Right ventricle myocardium inferior (tissue), 1 donor: ENCODE measurements at regions of chr6 and their contacts with region 1.

Region 1: DNA sequence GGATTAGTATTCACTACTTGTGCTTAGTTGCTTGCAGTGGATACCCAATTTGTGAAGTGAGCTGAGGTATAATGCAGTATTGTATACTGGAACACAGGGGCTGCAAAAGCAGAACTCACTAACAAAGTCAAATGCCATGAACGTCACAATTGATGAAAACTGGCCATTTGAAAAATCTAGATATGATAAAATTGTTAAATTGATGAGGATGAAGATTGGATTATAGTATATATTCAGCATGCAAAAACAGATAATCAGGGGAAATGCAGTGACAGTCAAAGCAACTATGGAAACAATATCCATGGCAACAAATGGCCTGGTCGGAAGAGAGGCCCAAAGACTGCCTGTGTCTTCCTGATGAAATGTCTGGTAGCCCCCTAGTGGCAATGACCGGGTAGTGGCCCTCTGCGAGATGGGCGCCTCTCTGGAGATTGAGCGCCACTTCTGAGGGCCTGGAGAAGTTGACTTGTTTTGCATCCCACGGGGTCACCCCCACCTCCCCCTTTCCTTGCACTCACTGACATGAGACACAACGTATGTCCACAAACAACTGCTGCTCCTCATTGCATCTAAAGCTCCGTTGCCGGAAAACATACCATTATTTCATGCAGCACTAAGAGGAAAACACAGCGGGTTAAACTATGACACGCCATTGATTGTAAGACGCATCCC is 43.6 kb downstream of the C6orf15 start:
- DNase-seq: peak; percentile 82
- ATAC-seq: peak; percentile 84

Region 2: DNA sequence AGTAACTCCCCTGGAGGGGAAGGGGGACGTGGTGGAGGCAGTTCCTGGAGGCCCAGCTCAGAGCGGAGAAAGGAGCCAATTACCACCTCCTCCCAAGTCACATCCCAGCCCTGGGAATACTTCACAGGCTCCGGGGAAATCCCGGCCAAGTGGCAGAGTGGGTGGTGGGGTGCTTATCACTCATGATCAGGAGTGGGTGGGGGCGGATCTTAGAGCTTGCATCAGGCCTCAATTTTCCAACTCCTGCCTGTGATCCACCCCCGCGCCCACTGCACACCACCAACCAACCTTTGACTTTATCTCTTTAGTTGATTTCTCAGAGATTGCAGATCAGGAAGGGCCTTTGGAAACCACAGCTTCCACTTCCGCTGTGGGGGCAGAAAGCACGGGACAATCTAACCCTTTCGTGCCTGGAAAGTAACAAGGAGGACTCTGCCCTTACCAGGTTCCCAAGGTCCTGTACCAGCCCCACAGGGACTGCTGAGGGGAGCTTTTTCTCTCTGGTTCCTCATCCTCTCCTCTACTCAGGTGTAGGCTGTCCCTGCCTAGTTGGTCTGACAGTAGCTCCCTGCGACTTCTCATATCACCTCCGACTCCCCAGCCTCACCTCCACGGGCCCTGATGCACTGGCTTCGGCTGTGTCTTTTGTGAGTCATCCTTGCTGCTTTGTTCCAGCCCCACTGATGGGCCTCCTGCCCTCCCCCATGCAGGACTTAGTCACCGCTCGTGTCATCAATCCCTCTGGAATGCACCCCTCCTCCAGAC is 299.5 kb before region 1 on chr6:
- intact Hi-C with region 1: no loop called
- DNase-seq: no peak
- ATAC-seq: peak; percentile 53

Region 3: DNA sequence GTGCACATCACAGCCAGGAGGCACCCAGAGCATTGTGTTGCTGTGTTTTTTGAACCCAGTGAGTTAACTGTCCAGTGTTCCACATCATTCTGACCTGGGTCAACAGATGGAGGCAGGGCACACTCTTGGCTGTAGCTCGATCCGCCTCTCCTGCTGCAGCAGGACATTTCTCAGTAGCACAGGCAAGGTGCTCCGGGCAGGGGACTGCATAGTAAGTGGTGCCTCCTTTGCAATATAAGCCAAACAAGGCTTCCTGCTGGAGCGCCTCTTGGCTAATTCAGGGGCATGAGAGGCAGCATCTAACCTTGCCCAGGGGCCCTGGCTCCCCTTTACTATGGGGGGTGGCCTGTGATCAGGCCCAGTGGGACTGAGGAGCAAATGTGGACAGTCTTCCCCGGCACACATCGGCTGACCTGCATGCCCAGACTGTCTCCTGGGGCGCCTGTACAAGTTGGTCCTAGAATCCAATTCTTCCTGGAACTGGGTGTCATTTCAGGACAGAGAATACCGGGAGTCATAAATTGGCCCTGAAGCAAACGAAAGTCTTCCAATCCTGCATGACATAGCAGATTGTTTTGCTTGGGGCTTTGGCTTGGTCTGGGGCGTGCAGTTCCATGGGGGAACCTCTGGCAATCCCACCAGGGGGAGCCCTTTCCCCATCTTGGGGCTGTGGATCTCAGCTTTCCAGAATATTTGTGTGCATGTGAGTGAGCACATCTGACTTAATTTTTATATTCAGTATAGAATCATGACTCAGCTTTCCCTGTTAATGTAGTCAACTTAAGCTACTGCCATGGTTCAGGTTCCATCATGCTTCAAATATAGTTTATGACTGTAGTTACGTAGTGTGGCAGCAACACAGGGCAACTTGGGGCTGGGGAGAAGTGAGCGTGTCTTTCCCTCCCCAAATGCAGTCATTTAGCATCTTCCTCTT is 240.5 kb before region 1 on chr6:
- intact Hi-C with region 1: loop called (anchors 2 kb)
- DNase-seq: peak; percentile 91
- ATAC-seq: peak; percentile 96